Upper lobe of right lung (tissue), 1 donor: ENCODE measurements at regions of chr10 and their contacts with region 1.

Region 1: GRCh38 chr10:91632671-91633550 is at the start of gene PPP1R3C:
- DNase-seq: peak; percentile 90
- ATAC-seq: peak; percentile 97
- H3K4me3 ChIP-seq: peak within 1 kb of the TSS; percentile 60
- H3K27ac ChIP-seq: peak within 1 kb of the TSS; percentile 49
- H3K4me1 ChIP-seq: no peaks in the 10 kb centered on the region
- H3K27me3 ChIP-seq: no peaks in the 10 kb centered on the region
- CTCF ChIP-seq: peak; percentile 27
- total RNA-seq, gene PPP1R3C: 15.1 TPM

Region 2: DNA sequence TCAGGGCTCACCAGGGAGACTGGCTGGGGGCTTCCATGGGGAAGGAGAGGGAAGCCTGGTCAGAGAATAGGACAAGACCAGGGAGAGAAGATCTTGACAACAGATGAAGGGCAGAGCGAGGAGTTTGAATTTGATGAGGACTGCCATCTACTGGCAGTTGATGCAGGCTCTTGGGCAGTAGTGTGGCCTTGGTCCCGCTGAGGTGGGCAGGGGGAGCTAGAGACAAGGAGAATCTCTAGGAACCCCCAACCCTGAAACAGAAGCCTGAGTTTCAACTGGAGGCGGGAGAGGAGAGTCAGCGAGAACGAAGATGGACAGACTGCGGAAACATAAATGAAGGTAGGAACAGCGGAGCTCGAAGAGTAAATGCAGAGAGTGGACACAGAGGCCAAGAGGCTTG is 81.1 kb before region 1 on chr10:
- intact Hi-C with region 1: loop called (anchors 10 kb)
- DNase-seq: no peak
- ATAC-seq: peak; percentile 43
- H3K4me3 ChIP-seq: no peak overlapping the region
- H3K27ac ChIP-seq: no peak overlapping the region
- H3K4me1 ChIP-seq: no peaks in the 10 kb centered on the region
- H3K27me3 ChIP-seq: no peaks in the 10 kb centered on the region
- CTCF ChIP-seq: peak; percentile 50

Region 3: GRCh38 chr10:91672021-91672608 is 39.2 kb after region 1 on chr10:
- intact Hi-C with region 1: no loop called
- DNase-seq: no peak
- ATAC-seq: no peak
- H3K4me3 ChIP-seq: no peak overlapping the region
- H3K27ac ChIP-seq: no peak overlapping the region
- H3K4me1 ChIP-seq: no peaks in the 10 kb centered on the region
- H3K27me3 ChIP-seq: no peaks in the 10 kb centered on the region
- CTCF ChIP-seq: no peak